ENCODE measurements at regions of chr2 and their contacts with region 1.

Region 1: GRCh38 chr2:54139210-54139609 is 23.8 kb downstream of the ACYP2 start:
- DNase-seq: peak; percentile 24
- ATAC-seq: no peak
- H3K4me3 ChIP-seq: no peak overlapping the region
- H3K27ac ChIP-seq: peak overlapping the region; percentile 24
- H3K4me1 ChIP-seq: peaks cover 32% of the 10 kb centered on the region
- H3K27me3 ChIP-seq: no peaks in the 10 kb centered on the region
- CTCF ChIP-seq: no peak
- EP300 ChIP-seq: no peak
- POLR2A ChIP-seq: no peak
- RAD21 ChIP-seq: no peak

Region 2: GRCh38 chr2:53952519-53952918 is 186.7 kb before region 1 on chr2:
- CTCF ChIA-PET with region 1: no interaction called
- POLR2A ChIA-PET with region 1: no interaction called
- in situ Hi-C with region 1: no loop called
- intact Hi-C with region 1: no loop called
- DNase-seq: no peak
- ATAC-seq: peak; percentile 66
- H3K4me3 ChIP-seq: no peak overlapping the region
- H3K27ac ChIP-seq: no peak overlapping the region
- H3K4me1 ChIP-seq: no peaks in the 10 kb centered on the region
- H3K27me3 ChIP-seq: no peaks in the 10 kb centered on the region
- CTCF ChIP-seq: no peak
- EP300 ChIP-seq: no peak
- POLR2A ChIP-seq: no peak
- RAD21 ChIP-seq: no peak

Region 3: DNA sequence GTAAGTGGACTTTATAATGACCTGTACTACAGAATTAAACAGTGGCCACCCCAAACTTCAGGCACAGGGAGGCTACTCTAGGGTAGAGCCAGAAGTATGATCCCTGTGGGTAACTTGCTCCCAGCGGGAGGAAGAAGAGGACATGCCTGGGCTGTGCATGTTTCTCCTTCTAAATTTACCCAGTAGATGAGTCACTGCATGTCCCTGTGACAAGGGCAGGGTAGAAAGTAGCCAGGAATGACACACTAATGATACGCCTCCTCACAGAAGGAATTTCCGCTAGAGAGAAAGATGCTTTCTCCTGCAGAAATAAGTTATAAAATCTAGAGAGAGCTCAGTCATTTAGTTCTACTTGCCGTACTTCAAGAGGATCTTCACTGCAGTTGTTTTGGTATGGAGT is 16.3 kb before region 1 on chr2:
- CTCF ChIA-PET with region 1: no interaction called
- POLR2A ChIA-PET with region 1: no interaction called
- in situ Hi-C with region 1: no loop called
- intact Hi-C with region 1: loop called (anchors 1 kb)
- DNase-seq: peak; percentile 79
- ATAC-seq: peak; percentile 84
- H3K4me3 ChIP-seq: peak overlapping the region in 1 of 3 experiments; percentile 31; a peak in 1 of 6 replicates
- H3K27ac ChIP-seq: peak overlapping the region; percentile 69
- H3K4me1 ChIP-seq: peaks cover 41% of the 10 kb centered on the region
- H3K27me3 ChIP-seq: no peaks in the 10 kb centered on the region
- CTCF ChIP-seq: no peak
- EP300 ChIP-seq: 0 out of 4 replicates have a peak, but pooled peaks of 1 of the 2 experiments have one; percentile 22
- POLR2A ChIP-seq: no peak
- RAD21 ChIP-seq: no peak

Measured in HepG2 (cell line).